A673 (cell line): ENCODE measurements at regions of chr7 and their contacts with region 1.

Region 1: GRCh38 chr7:99719996-99720769 is 14.8 kb downstream of the CYP3A7 start:
- DNase-seq: no peak
- H3K4me3 ChIP-seq: no peak overlapping the region
- H3K27ac ChIP-seq: no peak overlapping the region
- H3K4me1 ChIP-seq: no peaks in the 10 kb centered on the region
- H3K27me3 ChIP-seq: no peaks in the 10 kb centered on the region
- CTCF ChIP-seq: no peak

Region 2: DNA sequence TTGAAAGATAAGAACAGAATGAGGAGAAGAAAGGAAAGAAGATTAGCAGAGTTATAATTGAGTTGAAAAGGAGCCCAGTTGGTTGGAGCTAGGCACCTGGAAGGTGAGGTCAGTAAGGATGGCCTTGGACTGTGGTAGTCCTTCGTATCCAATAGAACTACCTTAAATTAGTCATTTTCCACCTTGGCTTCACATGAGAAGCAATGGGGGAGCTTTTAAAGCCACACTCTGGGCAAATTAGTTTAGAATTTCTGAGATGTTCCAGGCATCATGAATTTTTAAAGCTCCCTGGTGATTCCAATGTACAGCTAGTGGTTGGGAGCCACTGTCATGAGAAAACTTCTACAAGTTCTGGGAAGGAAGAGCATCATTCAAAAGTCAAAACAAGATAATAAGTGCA is 13.1 kb before region 1 on chr7:
- CTCF ChIA-PET with region 1: no interaction called
- POLR2A ChIA-PET with region 1: no interaction called
- intact Hi-C with region 1: loop called (anchors 1 kb)
- DNase-seq: no peak
- H3K4me3 ChIP-seq: no peak overlapping the region
- H3K27ac ChIP-seq: no peak overlapping the region
- H3K4me1 ChIP-seq: no peaks in the 10 kb centered on the region
- H3K27me3 ChIP-seq: no peaks in the 10 kb centered on the region
- CTCF ChIP-seq: no peak